Testis (tissue), 5 donors: ENCODE measurements at regions of chr6 and their contacts with region 1.

Region 1: GRCh38 chr6:650098-650497 is 6.8 kb downstream of the HUS1B start:
- DNase-seq: no peak
- H3K4me3 ChIP-seq: no peak overlapping the region
- H3K27ac ChIP-seq: no peak overlapping the region
- H3K4me1 ChIP-seq: no peaks in the 10 kb centered on the region
- H3K27me3 ChIP-seq: no peaks in the 10 kb centered on the region
- CTCF ChIP-seq: no peak
- POLR2A ChIP-seq: no peak

Region 2: GRCh38 chr6:537114-537513 is 113.0 kb before region 1 on chr6:
- intact Hi-C with region 1: no loop called
- DNase-seq: no peak
- H3K4me3 ChIP-seq: no peak overlapping the region
- H3K27ac ChIP-seq: no peak overlapping the region
- H3K4me1 ChIP-seq: no peaks in the 10 kb centered on the region
- H3K27me3 ChIP-seq: no peaks in the 10 kb centered on the region
- CTCF ChIP-seq: no peak
- POLR2A ChIP-seq: no peak

Region 3: GRCh38 chr6:885051-885590 is 235.0 kb after region 1 on chr6:
- intact Hi-C with region 1: loop called (anchors 5 kb)
- DNase-seq: no peak
- H3K4me3 ChIP-seq: no peak overlapping the region
- H3K27ac ChIP-seq: no peak overlapping the region
- H3K4me1 ChIP-seq: no peaks in the 10 kb centered on the region
- H3K27me3 ChIP-seq: no peaks in the 10 kb centered on the region
- CTCF ChIP-seq: no peak
- POLR2A ChIP-seq: no peak